Activated B cell treated with CpG ODN at 0.5 μM for 24 hours (primary cell): ENCODE measurements at regions of chr9 and their contacts with region 1.

Region 1: GRCh38 chr9:132240753-132241493 is 79.1 kb downstream of the NTNG2 start:
- DNase-seq: peak; percentile 98
- ATAC-seq: peak; percentile 90
- H3K4me3 Mint-ChIP-seq: peak overlapping the region; percentile 96
- H3K27ac Mint-ChIP-seq: peak overlapping the region; percentile 89
- H3K4me1 Mint-ChIP-seq: peaks cover 15% of the 10 kb centered on the region
- H3K27me3 Mint-ChIP-seq: no peaks in the 10 kb centered on the region
- CTCF ChIP-seq: no peak

Region 2: DNA sequence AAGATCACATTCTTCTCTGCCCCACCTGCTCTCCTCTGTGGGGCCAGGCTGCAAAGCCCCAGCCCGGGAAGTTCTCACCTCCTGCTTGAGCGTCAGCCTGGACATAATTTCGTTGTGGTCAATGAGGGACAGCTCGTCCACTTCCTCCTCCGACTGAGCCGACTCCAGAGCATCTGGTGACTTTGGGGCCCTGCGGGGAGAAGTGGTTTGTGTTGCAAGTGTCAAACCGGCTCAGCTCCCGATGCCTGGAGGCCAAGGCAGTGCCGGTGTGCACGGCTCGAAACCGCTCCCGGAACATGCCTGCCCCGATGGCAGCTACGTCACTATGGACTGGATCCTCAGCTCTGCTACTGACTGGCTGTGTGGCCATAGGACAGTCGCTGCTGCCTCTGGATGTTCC is 642.8 kb before region 1 on chr9:
- CTCF ChIA-PET with region 1: no interaction called
- POLR2A ChIA-PET with region 1: no interaction called
- intact Hi-C with region 1: no loop called
- DNase-seq: no peak
- ATAC-seq: no peak
- H3K4me3 Mint-ChIP-seq: no peak overlapping the region
- H3K27ac Mint-ChIP-seq: peak overlapping the region; percentile 46
- H3K4me1 Mint-ChIP-seq: no peaks in the 10 kb centered on the region
- H3K27me3 Mint-ChIP-seq: no peaks in the 10 kb centered on the region
- CTCF ChIP-seq: no peak

Region 3: DNA sequence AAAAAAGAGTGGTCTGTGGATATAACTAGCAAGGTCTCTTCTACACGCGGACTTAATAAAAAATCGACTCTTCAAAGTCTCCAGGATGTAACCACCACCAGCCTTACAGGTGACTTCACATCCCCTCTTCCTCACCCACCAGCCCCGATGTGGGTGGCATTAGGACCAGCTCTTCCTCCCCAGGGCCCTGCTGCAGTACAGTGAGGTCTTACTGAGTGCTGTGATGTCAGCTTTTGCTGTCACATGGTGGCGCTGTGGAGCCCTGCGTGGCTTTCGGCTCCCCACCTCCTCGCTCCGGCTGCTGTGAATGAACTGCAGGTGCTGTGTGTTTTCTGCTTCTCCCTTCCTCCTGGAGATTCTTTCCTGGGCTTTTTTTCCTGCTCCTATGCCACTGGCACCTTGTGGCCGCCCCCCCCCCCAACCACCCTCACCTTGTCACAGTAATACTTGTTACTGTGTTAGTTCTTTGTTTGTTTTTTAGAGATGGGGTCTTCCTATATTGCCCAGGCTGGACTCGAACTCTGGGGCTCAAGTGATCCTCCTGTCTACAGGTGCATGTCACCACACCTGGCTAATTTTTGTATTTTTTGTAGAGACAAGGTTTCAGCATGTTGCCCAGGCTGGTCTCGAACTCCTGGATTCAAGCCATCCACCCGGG is 485.3 kb before region 1 on chr9:
- CTCF ChIA-PET with region 1: interaction called, 7 read pairs
- POLR2A ChIA-PET with region 1: no interaction called
- intact Hi-C with region 1: loop called (anchors 2 kb)
- DNase-seq: peak; percentile 77
- ATAC-seq: peak; percentile 100
- H3K4me3 Mint-ChIP-seq: no peak overlapping the region
- H3K27ac Mint-ChIP-seq: peak overlapping the region; percentile 32
- H3K4me1 Mint-ChIP-seq: peaks cover 5% of the 10 kb centered on the region
- H3K27me3 Mint-ChIP-seq: peaks cover 7% of the 10 kb centered on the region
- CTCF ChIP-seq: no peak

Region 4: GRCh38 chr9:132079391-132080091 is 161.4 kb before region 1 on chr9 and contains the start of gene MED27:
- CTCF ChIA-PET with region 1: no interaction called
- POLR2A ChIA-PET with region 1: no interaction called
- intact Hi-C with region 1: loop called (anchors 1 kb)
- DNase-seq: peak; percentile 88
- ATAC-seq: peak; percentile 99
- H3K4me3 Mint-ChIP-seq: peak within 1 kb of the TSS; percentile 93
- H3K27ac Mint-ChIP-seq: peak within 1 kb of the TSS; percentile 81
- H3K4me1 Mint-ChIP-seq: peaks cover 30% of the 10 kb centered on the region
- H3K27me3 Mint-ChIP-seq: peaks cover 7% of the 10 kb centered on the region
- CTCF ChIP-seq: no peak
- total RNA-seq, gene MED27: 18.8 and 24.5 TPM in 2 replicates

Region 5: DNA sequence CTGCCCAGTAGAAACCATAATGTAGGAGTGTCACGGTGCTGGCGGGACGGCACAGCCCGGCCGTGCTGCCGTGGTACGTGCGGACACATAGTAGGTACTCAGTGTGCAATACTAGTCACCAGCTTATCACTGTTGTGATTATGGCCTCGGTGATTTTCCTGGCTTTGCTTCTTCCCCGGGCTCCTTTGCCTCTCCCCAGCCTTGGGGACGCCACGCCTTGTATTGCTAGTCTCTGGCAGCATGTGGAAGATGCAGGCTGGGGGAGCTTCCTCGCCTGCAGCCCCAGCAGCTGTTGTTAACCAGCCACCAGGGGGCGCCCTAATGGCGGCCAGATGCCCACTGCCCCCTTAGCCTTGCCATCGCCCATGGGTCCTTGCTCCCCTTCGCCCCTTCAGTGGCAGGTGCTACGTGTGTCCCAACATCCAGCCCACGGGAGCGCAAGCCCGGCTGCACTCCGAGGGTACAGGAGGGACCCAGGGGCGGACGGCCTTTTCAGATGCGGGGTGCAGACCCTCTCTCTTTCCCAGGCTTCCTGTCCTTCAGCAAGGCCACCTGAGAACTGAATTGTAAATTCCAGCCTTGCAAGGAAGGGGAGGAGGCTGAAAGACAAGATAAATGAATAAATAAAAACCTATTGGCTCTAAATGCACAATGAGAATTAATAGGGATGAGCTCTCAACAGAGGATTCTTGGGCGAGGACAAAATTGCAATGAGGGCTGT is 71.1 kb before region 1 on chr9:
- CTCF ChIA-PET with region 1: interaction called, 39 read pairs
- POLR2A ChIA-PET with region 1: no interaction called
- intact Hi-C with region 1: loop called (anchors 1 kb)
- DNase-seq: peak; percentile 59
- ATAC-seq: peak; percentile 54
- H3K4me3 Mint-ChIP-seq: no peak overlapping the region
- H3K27ac Mint-ChIP-seq: no peak overlapping the region
- H3K4me1 Mint-ChIP-seq: no peaks in the 10 kb centered on the region
- H3K27me3 Mint-ChIP-seq: peaks cover 52% of the 10 kb centered on the region
- CTCF ChIP-seq: peak; percentile 53

Region 6: GRCh38 chr9:132354637-132355355 is 113.9 kb after region 1 on chr9 and contains the start of gene SETX:
- CTCF ChIA-PET with region 1: no interaction called
- POLR2A ChIA-PET with region 1: interaction called, 10 read pairs
- intact Hi-C with region 1: loop called (anchors 1 kb)
- DNase-seq: peak; percentile 93
- ATAC-seq: peak; percentile 87
- H3K4me3 Mint-ChIP-seq: peak within 1 kb of the TSS; percentile 94
- H3K27ac Mint-ChIP-seq: peak within 1 kb of the TSS; percentile 97
- H3K4me1 Mint-ChIP-seq: peaks cover 53% of the 10 kb centered on the region
- H3K27me3 Mint-ChIP-seq: no peaks in the 10 kb centered on the region
- CTCF ChIP-seq: no peak
- total RNA-seq, gene SETX: 91.3 and 109 TPM in 2 replicates

Region 7: DNA sequence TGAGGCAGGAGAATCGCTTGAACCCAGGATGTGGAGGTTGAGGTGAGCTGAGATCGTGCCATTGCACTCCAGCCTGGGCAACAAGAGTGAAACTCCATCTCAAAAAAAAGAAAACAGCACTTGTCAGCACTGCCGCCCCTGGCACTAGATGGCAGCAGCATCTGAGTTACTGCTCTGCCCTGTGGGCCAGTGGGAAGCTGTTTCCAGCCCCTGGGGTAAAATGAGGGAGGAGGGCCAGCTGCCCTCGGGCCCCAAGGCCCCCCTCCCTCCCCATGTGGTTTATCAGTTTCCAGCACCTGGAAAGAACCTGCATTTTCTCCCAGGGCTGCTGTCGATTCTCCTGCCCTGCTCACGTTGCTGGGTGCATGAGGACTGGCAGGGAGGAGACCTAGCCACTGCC is 807.6 kb after region 1 on chr9:
- CTCF ChIA-PET with region 1: no interaction called
- POLR2A ChIA-PET with region 1: no interaction called
- intact Hi-C with region 1: no loop called
- DNase-seq: no peak
- ATAC-seq: peak; percentile 49
- H3K4me3 Mint-ChIP-seq: no peak overlapping the region
- H3K27ac Mint-ChIP-seq: no peak overlapping the region
- H3K4me1 Mint-ChIP-seq: no peaks in the 10 kb centered on the region
- H3K27me3 Mint-ChIP-seq: no peaks in the 10 kb centered on the region
- CTCF ChIP-seq: no peak